Sciatic nerve (tissue), 2 donors: ENCODE measurements at regions of chr1 and their contacts with region 1.

Region 1: DNA sequence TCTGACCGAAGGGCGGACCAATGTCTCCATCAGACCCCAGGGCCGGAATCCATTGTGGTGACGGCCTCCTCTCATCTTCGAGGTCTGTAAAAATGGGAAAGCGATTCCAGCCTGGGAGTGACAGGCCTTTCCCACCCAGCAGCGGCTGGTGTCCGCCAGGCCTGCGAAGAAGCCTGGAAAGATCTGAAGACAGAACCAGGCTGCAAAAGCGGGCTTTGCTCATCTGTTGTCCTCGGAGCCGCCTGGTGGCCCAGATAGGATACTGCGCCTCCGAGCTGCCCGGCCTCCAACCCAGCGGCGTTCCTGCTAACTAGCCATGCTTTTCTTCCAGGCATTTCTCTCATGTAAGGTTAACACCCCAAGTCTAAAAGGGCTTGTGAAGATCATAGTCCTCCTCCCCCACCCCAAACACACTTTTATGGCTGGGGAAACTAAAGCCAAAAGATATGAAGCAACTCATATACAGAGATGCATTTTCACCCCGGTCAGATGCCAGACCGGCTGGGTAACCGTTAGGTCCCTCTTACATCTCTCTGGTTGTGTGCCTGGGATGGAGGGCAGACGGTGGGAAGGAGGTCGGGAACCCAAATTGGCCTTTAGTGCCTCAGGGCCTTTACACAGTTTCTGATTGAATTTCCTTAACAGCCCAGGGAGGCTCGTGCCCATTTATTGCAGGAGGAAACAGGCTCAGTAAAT is 1.9 kb upstream of the DHRS3 start:
- DNase-seq: peak; percentile 92
- ATAC-seq: peak; percentile 67

Region 2: GRCh38 chr1:12314333-12314903 is 305.5 kb before region 1 on chr1:
- intact Hi-C with region 1: loop called (anchors 10 kb)
- DNase-seq: no peak
- ATAC-seq: peak; percentile 73

Region 3: DNA sequence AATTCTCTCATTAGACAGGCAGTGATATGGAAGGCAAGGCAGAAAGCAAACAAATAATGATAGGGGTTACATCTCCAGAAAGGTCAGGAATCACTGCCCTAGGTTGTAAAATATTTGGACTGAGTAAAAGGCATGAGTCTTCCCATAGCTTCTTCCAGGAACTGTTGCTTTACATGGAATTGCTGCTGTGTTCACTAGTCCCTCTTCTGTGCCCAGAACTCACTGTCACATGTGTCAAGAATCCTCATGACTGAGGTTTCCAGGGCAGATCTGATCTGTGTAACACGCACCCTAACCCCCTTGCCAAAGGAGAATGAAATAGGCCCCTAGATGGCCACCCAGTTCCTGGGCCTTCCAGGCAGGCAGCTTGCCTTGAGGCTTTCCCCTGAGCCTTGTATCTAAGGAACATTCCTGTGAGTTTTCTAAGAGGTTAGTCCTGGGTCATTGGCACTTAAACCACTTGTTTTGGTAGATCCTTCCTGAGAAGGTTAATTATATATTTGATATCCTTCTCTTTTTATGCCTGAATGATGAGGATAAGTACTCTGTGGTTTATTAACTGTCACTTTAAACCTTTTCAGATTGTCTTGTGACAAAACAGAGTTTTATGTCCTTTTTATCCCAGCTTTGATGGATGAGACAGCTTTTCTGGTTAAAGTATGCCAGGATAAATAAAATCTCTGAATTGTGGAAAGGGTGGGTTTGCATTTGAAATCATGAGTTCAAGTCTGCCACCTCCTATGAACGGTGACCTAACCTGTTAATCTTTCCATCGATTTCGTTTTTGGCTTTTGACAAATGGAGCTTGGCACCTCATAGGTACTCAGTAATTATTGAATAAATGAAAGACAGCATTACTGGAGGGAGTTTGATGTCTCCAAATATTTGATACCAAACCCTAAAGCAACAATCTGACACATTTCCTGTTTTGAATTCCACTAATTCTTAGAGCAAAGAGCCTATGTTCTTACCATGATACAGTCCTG is 165.2 kb before region 1 on chr1:
- intact Hi-C with region 1: loop called (anchors 10 kb)
- DNase-seq: no peak
- ATAC-seq: peak; percentile 78